CD4-positive, alpha-beta T cell (primary cell): ENCODE measurements at regions of chr1 and their contacts with region 1.

Region 1: GRCh38 chr1:193741228-193741627 is 554.8 kb upstream of the B3GALT2 start:
- DNase-seq: no peak
- ATAC-seq: no peak
- H3K4me3 ChIP-seq: no peak overlapping the region
- H3K4me3 Mint-ChIP-seq: no peak overlapping the region
- H3K27ac ChIP-seq: no peak overlapping the region
- H3K27ac Mint-ChIP-seq: no peak overlapping the region
- H3K4me1 ChIP-seq: no peaks in the 10 kb centered on the region
- H3K4me1 Mint-ChIP-seq: no peaks in the 10 kb centered on the region
- H3K27me3 ChIP-seq: no peaks in the 10 kb centered on the region
- H3K27me3 Mint-ChIP-seq: no peaks in the 10 kb centered on the region
- CTCF ChIP-seq: no peak

Region 2: GRCh38 chr1:193785850-193786420 is 44.7 kb after region 1 on chr1:
- CTCF ChIA-PET with region 1: no interaction called
- POLR2A ChIA-PET with region 1: no interaction called
- intact Hi-C with region 1: loop called in 1 of 2 experiments (anchors 2 kb)
- DNase-seq: no peak
- ATAC-seq: no peak
- H3K4me3 ChIP-seq: no peak overlapping the region
- H3K4me3 Mint-ChIP-seq: no peak overlapping the region
- H3K27ac ChIP-seq: no peak overlapping the region
- H3K27ac Mint-ChIP-seq: no peak overlapping the region
- H3K4me1 ChIP-seq: no peaks in the 10 kb centered on the region
- H3K4me1 Mint-ChIP-seq: no peaks in the 10 kb centered on the region
- H3K27me3 ChIP-seq: no peaks in the 10 kb centered on the region
- H3K27me3 Mint-ChIP-seq: no peaks in the 10 kb centered on the region
- CTCF ChIP-seq: no peak

Region 3: GRCh38 chr1:193979219-193979618 is 238.0 kb after region 1 on chr1:
- CTCF ChIA-PET with region 1: no interaction called
- POLR2A ChIA-PET with region 1: no interaction called
- intact Hi-C with region 1: no loop called
- DNase-seq: no peak
- ATAC-seq: no peak
- H3K4me3 ChIP-seq: no peak overlapping the region
- H3K4me3 Mint-ChIP-seq: no peak overlapping the region
- H3K27ac ChIP-seq: no peak overlapping the region
- H3K27ac Mint-ChIP-seq: no peak overlapping the region
- H3K4me1 ChIP-seq: no peaks in the 10 kb centered on the region
- H3K4me1 Mint-ChIP-seq: no peaks in the 10 kb centered on the region
- H3K27me3 ChIP-seq: no peaks in the 10 kb centered on the region
- H3K27me3 Mint-ChIP-seq: no peaks in the 10 kb centered on the region
- CTCF ChIP-seq: no peak